ENCODE measurements at regions of chr21 and their contacts with region 1.

Region 1: DNA sequence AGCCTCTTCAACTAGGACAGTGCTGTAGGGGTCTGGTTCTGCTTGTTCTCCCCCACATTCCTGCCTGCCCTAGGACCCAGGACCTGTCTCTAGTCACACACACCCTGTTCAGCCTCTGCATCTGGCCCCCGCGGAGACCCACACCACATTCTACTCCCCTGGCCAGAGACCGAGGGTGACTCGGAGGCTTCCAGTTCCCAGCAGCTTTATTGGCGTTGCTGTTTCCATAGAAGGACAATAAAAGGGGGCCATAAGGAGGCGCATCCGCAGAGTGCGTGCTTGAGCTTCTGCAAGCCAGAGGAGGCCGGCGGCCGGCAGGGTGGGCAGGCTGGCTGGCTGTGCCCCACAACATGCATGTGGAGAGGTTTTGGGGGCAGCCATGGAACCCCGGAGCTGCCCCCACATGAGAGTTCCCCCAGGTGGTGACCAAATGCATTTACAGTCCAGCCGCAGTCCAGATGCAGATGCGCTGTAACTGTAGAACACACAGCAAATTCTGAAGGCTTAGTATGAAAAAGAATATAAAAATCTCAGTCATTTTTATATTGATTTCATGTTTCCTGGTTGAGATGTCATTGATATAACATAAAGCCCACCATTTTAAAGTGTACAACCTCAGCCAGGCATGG is 52.4 kb downstream of the PDE9A start:
- DNase-seq: no peak
- H3K4me3 ChIP-seq: no peak overlapping the region
- H3K27ac ChIP-seq: no peak overlapping the region
- H3K4me1 ChIP-seq: no peaks in the 10 kb centered on the region
- H3K27me3 ChIP-seq: no peaks in the 10 kb centered on the region
- CTCF ChIP-seq: no peak
- POLR2A ChIP-seq: no peak

Region 2: DNA sequence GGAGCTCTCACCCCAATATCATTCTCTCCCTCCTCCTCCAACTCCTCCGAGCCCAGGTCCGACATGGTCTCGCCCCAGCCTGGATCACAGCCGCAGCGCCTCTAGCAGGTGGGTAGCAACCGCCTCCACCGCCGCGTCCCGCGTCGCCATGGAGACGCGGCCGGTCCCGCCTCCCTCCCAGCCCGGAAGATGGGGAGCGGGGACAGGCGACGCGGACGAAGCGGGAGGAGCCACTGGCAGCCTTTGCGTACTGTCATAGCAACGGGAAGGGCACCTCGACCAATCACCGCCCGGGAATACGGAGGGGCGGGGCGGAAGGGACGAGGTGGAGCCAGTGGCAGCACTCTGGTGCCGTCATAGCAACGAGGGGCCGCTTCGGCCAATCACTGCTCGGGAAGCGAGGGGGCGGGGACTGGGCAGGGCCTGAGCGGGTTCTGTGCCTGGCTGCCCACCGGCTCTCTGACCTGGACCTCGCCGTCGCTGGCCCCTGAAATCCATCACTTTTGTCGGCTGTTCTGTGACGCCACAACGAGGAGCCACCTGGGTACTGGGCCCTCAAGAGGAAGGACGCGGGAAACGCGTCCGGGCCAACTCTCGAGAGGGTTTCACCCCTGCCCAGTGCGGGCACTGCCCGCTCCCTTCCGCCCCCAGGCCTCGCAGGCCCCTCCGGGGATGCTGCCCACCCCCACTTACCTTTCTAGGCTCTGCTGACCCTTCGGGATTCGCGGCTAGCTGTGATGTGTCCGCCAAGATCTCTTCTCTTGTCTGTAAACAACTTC is 209.5 kb before region 1 on chr21 and contains the start of gene RSPH1:
- intact Hi-C with region 1: no loop called
- DNase-seq: peak in 1 of 2 donors; percentile 100
- H3K4me3 ChIP-seq: peak within 1 kb of the TSS; percentile 48 to 70
- H3K27ac ChIP-seq: peak within 1 kb of the TSS; percentile 87
- H3K4me1 ChIP-seq: peaks cover 12% of the 10 kb centered on the region
- H3K27me3 ChIP-seq: no peaks in the 10 kb centered on the region
- CTCF ChIP-seq: peak in 1 of 3 experiments; percentile 7
- POLR2A ChIP-seq: peak in 1 of 2 donors; percentile 67
- total RNA-seq, gene RSPH1: not detected

Region 3: DNA sequence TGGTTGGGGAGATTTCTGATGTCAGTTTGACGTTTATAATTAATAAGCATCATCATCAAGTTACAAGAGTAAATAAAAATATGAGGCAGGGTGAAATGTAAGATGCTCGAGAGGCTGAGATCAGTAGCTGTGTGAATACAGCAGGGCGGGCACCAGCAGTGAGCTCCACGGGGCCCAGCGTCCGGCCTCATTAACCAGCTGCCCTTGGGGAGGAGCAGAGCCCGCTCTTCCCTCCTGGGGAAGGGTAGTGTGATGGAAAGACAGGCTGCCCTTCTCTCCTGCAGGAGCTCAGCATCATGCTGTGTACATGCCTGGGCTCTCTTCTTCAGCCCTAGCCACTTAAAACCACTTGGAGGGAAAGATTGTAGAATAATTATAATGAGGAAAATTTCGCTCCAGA is 29.1 kb before region 1 on chr21:
- intact Hi-C with region 1: loop called (anchors 1 kb)
- DNase-seq: no peak
- H3K4me3 ChIP-seq: no peak overlapping the region
- H3K27ac ChIP-seq: no peak overlapping the region
- H3K4me1 ChIP-seq: peaks cover 26% of the 10 kb centered on the region
- H3K27me3 ChIP-seq: no peaks in the 10 kb centered on the region
- CTCF ChIP-seq: no peak
- POLR2A ChIP-seq: no peak

Region 4: DNA sequence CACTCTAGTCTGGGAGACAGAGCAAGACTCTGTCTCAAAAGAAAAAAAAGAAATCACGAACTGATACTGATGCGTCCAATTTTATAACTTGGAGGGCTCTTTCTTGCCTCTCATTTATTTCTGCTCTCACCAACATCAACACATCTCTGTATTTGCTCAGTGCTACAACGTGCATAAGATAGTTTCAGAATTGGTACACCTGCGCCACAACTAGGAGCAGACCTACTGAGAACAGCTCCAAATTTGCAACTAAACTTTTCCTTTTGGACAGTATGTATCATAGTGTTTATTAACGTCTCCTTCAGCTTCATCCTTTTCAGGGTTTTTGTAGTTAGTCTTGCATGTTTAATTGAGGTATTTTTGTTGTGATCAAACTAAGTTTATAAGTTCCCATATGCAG is 1334.0 kb after region 1 on chr21:
- intact Hi-C with region 1: loop called (anchors 5 kb)
- DNase-seq: no peak
- H3K4me3 ChIP-seq: no peak overlapping the region
- H3K27ac ChIP-seq: no peak overlapping the region
- H3K4me1 ChIP-seq: no peaks in the 10 kb centered on the region
- H3K27me3 ChIP-seq: no peaks in the 10 kb centered on the region
- CTCF ChIP-seq: no peak
- POLR2A ChIP-seq: no peak

Measured in vagina (tissue), 2 donors.